Activated B cell treated with CpG ODN at 0.5 μM for 24 hours (primary cell): ENCODE measurements at regions of chr11 and their contacts with region 1.

Region 1: GRCh38 chr11:59216641-59217564 is 4.2 kb upstream of the MPEG1 start:
- DNase-seq: peak; percentile 35
- ATAC-seq: peak; percentile 69
- H3K4me3 Mint-ChIP-seq: peak overlapping the region; percentile 52
- H3K27ac Mint-ChIP-seq: peak overlapping the region; percentile 91
- H3K4me1 Mint-ChIP-seq: peaks cover 100% of the 10 kb centered on the region
- H3K27me3 Mint-ChIP-seq: no peaks in the 10 kb centered on the region
- CTCF ChIP-seq: no peak

Region 2: DNA sequence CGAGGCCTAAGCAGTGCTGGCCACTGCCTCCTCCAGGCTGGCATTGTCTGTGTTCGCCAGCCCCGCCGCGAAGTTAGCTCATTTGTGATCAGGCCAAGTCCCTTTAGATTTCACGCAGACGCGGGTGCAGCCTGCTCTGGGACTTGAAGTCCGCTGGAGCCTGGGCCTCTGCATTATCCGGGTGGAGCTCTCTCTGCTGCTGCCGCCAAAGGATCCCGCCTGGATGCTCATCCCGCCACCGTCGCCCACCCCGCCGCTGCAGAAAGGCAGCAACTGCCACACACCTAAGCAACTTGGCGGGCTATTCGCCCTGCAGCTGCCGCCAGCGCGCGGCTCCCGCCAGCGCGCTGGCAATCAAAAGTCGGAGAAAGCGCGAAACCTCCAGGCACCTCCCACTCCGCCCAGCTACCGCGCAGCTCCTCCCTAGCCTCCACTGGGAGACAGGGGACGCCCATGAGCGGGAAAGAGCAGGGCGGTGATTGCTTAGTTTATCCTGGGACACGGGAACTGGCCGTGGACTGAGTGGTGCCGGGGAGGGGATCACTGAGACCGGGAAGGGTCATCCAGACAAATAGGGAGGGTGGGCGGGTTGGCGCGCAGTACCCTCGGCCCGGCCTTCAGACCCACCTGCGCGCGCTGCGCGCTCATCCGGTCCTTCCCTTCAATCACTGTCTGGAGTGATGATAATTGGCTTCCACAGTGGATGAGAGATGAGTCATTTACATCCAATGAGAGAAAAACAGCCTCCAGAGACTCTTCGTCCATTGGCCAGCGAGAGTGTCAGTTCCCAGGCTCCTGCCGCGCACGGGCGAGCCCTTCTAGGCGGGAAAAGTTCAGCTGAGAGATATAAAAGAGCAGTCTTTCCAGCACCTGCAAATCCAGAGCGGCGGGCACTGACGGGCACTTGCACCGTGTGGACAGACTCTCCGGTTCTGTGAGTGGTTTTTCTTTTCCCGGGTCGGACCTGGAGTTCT is 110.3 kb before region 1 on chr11 and contains the start of gene FAM111B:
- CTCF ChIA-PET with region 1: no interaction called
- POLR2A ChIA-PET with region 1: interaction called, 3 read pairs
- intact Hi-C with region 1: loop called (anchors 2 kb)
- DNase-seq: peak; percentile 43
- ATAC-seq: peak; percentile 33
- H3K4me3 Mint-ChIP-seq: peak within 1 kb of the TSS; percentile 94
- H3K27ac Mint-ChIP-seq: peak within 1 kb of the TSS; percentile 84
- H3K4me1 Mint-ChIP-seq: peaks cover 84% of the 10 kb centered on the region
- H3K27me3 Mint-ChIP-seq: no peaks in the 10 kb centered on the region
- CTCF ChIP-seq: no peak
- total RNA-seq, gene FAM111B: 48.0 and 49.1 TPM in 2 replicates

Region 3: DNA sequence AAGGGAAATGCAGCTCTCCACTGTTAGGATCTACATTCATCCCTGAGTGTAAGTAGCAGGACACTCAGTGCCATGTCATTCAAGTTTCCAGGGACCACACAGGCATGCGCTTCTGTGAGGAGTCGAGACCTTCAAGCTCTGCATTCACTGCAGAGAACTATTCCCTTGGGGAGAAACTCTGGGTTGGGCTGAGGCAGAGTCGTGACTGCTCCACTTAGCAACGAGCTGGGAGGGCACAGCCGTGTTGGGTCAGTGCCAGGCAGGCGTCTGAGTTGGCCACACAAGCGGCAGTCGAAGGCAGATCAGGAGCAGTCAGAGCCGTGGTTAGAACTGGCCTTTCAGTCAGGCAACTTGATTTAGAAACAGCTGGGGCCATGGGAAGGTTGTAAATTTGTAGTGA is 18.9 kb before region 1 on chr11:
- CTCF ChIA-PET with region 1: interaction called, 11 read pairs
- POLR2A ChIA-PET with region 1: interaction called, 51 read pairs
- intact Hi-C with region 1: loop called (anchors 1 kb)
- DNase-seq: no peak
- ATAC-seq: peak; percentile 26
- H3K4me3 Mint-ChIP-seq: no peak overlapping the region
- H3K27ac Mint-ChIP-seq: peak overlapping the region; percentile 88
- H3K4me1 Mint-ChIP-seq: peaks cover 82% of the 10 kb centered on the region
- H3K27me3 Mint-ChIP-seq: no peaks in the 10 kb centered on the region
- CTCF ChIP-seq: no peak

Region 4: DNA sequence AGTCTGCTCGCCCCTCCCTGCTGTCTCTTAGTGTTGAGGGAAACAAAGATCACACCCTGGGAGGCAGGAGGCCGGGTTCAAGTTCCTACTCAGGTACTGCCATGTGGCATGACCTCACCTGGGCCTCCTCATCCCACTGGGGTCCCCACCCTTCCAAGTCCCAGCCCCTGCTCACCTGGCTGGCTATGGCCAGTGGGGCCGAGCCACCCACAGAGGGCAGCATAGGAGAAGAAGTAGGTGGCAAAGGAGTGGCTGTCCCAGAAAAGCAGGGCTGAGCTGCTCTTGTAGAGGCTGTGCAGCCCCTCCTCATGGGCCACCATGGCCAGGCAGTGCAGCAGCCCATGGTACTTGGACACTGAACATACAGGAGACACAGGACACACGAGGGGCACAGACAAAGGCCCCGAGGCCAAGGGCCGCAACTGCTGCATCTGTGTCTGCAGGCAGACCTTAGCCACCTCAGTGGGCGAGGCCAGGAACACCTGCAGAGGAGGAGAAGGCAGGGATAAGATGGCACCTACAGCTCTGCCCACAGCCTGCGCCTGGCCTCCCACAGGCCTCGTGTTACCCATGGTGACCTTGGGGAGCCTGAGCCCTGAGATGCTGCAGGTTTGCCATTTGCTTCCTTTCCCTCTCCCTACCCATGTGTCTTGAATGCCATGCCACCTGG is 46.5 kb after region 1 on chr11:
- CTCF ChIA-PET with region 1: interaction called, 17 read pairs
- POLR2A ChIA-PET with region 1: interaction called, 100 read pairs
- intact Hi-C with region 1: no loop called
- DNase-seq: peak; percentile 52
- ATAC-seq: peak; percentile 65
- H3K4me3 Mint-ChIP-seq: no peak overlapping the region
- H3K27ac Mint-ChIP-seq: no peak overlapping the region
- H3K4me1 Mint-ChIP-seq: peaks cover 71% of the 10 kb centered on the region
- H3K27me3 Mint-ChIP-seq: no peaks in the 10 kb centered on the region
- CTCF ChIP-seq: no peak

Region 5: DNA sequence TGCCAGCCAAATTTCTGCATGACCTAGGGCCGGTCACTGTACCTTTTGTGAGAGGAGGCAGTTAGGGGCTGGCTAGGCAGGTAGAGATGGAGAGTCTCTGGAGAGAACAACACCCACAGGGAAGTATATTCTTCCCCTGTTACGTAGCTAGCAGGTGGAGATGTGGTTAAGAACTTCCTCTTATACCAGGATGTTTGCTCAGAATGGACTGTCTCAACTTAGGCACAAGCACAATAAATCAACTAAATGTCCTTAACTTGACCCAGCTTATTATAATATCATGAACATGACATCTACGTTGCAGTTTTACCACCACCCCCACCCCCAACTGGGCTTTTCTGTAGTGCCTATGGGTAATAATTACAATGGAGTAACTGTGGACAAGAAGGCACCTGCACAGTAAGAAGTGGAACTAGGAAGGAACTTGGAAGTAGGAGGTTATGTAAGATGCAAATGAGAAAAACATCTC is 56.5 kb after region 1 on chr11:
- CTCF ChIA-PET with region 1: interaction called, 9 read pairs
- POLR2A ChIA-PET with region 1: interaction called, 100 read pairs
- intact Hi-C with region 1: loop called (anchors 1 kb)
- DNase-seq: no peak
- ATAC-seq: peak; percentile 83
- H3K4me3 Mint-ChIP-seq: peak overlapping the region; percentile 70
- H3K27ac Mint-ChIP-seq: peak overlapping the region; percentile 92
- H3K4me1 Mint-ChIP-seq: peaks cover 91% of the 10 kb centered on the region
- H3K27me3 Mint-ChIP-seq: no peaks in the 10 kb centered on the region
- CTCF ChIP-seq: no peak

Region 6: GRCh38 chr11:59560702-59561469 is 344.0 kb after region 1 on chr11:
- CTCF ChIA-PET with region 1: no interaction called
- POLR2A ChIA-PET with region 1: no interaction called
- intact Hi-C with region 1: loop called (anchors 2 kb)
- DNase-seq: peak; percentile 62
- ATAC-seq: peak; percentile 78
- H3K4me3 Mint-ChIP-seq: peak overlapping the region; percentile 92
- H3K27ac Mint-ChIP-seq: peak overlapping the region; percentile 91
- H3K4me1 Mint-ChIP-seq: peaks cover 43% of the 10 kb centered on the region
- H3K27me3 Mint-ChIP-seq: peaks cover 3% of the 10 kb centered on the region
- CTCF ChIP-seq: no peak